ENCODE measurements at regions of chr11 and their contacts with region 1.

Region 1: DNA sequence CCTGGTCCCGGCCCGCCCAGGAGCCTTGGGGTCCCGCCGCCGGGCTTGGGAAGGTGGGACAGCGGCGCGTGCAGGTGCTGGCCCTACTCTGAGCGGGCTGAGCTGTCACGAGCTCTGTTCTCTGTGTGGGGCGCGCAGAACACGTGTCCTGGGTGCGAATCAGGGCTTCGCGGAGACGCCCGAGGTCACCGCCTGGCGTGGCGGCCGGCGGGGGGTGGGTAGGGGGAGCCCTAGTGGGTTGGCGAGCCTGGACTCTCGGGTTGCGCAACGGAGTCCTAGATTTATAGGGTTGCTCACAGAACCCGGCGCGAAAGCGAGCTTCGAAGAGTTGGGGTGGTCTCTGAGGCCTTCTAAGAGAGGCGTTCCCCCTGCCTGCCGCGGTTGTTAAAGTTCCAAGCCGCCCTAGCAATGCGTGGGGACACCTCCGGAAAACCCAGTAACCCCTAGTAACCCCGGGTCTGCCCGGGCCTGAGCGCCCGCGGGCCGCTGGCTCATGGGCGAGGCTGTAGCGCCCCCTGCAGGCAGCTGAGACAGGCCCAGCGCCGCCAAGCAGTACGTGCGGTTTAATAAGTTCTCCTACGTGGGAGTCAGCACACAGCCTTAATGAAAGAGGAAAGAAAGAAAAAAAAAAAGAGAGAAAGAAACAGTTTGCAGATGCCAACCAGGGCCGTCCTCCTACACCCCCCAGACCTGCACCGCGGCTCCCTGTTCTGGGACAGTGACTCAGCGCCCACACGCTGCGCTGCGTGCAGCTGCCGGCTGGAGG is 2.8 kb downstream of the ADM start:
- DNase-seq: peak; percentile 82 to 90 (median 87)
- H3K4me3 ChIP-seq: peak overlapping the region; percentile 79 to 97 (median 89)
- H3K4me3 Mint-ChIP-seq: peak overlapping the region; percentile 96 to 99
- H3K27ac ChIP-seq: peak overlapping the region in 1 of 2 donors; percentile 52
- H3K27ac Mint-ChIP-seq: peak overlapping the region; percentile 60 to 90 (median 77)
- H3K4me1 ChIP-seq: peaks cover 40 to 43% of the 10 kb centered on the region in 2 donors
- H3K4me1 Mint-ChIP-seq: peaks cover 32% of the 10 kb centered on the region
- H3K27me3 ChIP-seq: peaks cover 0 to 16% of the 10 kb centered on the region in 2 donors
- H3K27me3 Mint-ChIP-seq: peaks cover 16 to 25% (median 23%) of the 10 kb centered on the region in 3 donors
- CTCF ChIP-seq: peak; percentile 100

Region 2: GRCh38 chr11:9757809-9758636 is 549.6 kb before region 1 on chr11:
- intact Hi-C with region 1: loop called in 1 of 2 experiments (anchors 5 kb)
- DNase-seq: peak; percentile 78 to 92 (median 84)
- H3K4me3 ChIP-seq: peak overlapping the region; percentile 50 to 82 (median 66)
- H3K4me3 Mint-ChIP-seq: peak overlapping the region; percentile 76 to 91
- H3K27ac ChIP-seq: peak overlapping the region in 1 of 2 donors; percentile 75
- H3K27ac Mint-ChIP-seq: peak overlapping the region; percentile 38 to 91 (median 79)
- H3K4me1 ChIP-seq: peaks cover 19 to 24% of the 10 kb centered on the region in 2 donors
- H3K4me1 Mint-ChIP-seq: peaks cover 41% of the 10 kb centered on the region
- H3K27me3 ChIP-seq: no peaks in the 10 kb centered on the region
- H3K27me3 Mint-ChIP-seq: peaks cover 5 to 8% (median 7%) of the 10 kb centered on the region in 3 donors
- CTCF ChIP-seq: peak; percentile 92

Region 3: GRCh38 chr11:10019906-10020682 is 287.5 kb before region 1 on chr11:
- intact Hi-C with region 1: loop called in 1 of 2 experiments (anchors 10 kb)
- DNase-seq: peak in 2 of 3 donors; percentile 5 to 9
- H3K4me3 ChIP-seq: no peak overlapping the region
- H3K4me3 Mint-ChIP-seq: peak overlapping the region in 1 of 2 donors; percentile 65
- H3K27ac ChIP-seq: peak overlapping the region in 1 of 2 donors; percentile 42
- H3K27ac Mint-ChIP-seq: peak overlapping the region in 4 of 7 donors; percentile 66 to 75 (median 72)
- H3K4me1 ChIP-seq: peaks cover 24 to 35% of the 10 kb centered on the region in 2 donors
- H3K4me1 Mint-ChIP-seq: peaks cover 43% of the 10 kb centered on the region
- H3K27me3 ChIP-seq: no peaks in the 10 kb centered on the region
- H3K27me3 Mint-ChIP-seq: peaks cover 0 to 1% (median 0%) of the 10 kb centered on the region in 3 donors
- CTCF ChIP-seq: no peak

Region 4: GRCh38 chr11:10255388-10256125 is 52.1 kb before region 1 on chr11:
- intact Hi-C with region 1: no loop called
- DNase-seq: peak; percentile 9 to 36 (median 33)
- H3K4me3 ChIP-seq: no peak overlapping the region
- H3K4me3 Mint-ChIP-seq: no peak overlapping the region
- H3K27ac ChIP-seq: peak overlapping the region in 1 of 2 donors; percentile 55
- H3K27ac Mint-ChIP-seq: peak overlapping the region in 5 of 7 donors; percentile 0 to 63 (median 18)
- H3K4me1 ChIP-seq: peaks cover 8 to 15% of the 10 kb centered on the region in 2 donors
- H3K4me1 Mint-ChIP-seq: peaks cover 16% of the 10 kb centered on the region
- H3K27me3 ChIP-seq: no peaks in the 10 kb centered on the region
- H3K27me3 Mint-ChIP-seq: peaks cover 0 to 1% (median 0%) of the 10 kb centered on the region in 3 donors
- CTCF ChIP-seq: no peak

Region 5: DNA sequence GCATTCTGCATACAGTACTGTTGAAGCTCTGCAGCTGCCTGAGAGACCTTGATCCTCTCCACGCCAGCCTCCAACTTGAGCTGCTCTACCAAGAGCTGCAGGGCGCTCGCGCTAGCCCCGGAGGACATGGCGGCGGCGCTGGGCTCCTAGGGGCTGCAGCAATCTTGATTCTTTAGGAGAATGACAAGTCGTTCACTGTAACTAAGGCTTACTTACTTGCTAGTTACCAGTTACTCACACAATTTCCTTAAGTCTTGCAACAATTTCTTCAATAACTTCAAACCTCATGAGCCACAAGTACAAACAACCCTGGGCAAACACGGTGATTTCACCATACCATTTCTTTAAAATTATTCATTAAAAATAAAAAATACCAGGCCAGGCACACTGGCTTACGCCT is 35.5 kb before region 1 on chr11:
- intact Hi-C with region 1: no loop called
- DNase-seq: no peak
- H3K4me3 ChIP-seq: no peak overlapping the region
- H3K4me3 Mint-ChIP-seq: no peak overlapping the region
- H3K27ac ChIP-seq: no peak overlapping the region
- H3K27ac Mint-ChIP-seq: no peak overlapping the region
- H3K4me1 ChIP-seq: no peaks in the 10 kb centered on the region
- H3K4me1 Mint-ChIP-seq: peaks cover 11% of the 10 kb centered on the region
- H3K27me3 ChIP-seq: no peaks in the 10 kb centered on the region
- H3K27me3 Mint-ChIP-seq: no peaks in the 10 kb centered on the region
- CTCF ChIP-seq: no peak

Region 6: DNA sequence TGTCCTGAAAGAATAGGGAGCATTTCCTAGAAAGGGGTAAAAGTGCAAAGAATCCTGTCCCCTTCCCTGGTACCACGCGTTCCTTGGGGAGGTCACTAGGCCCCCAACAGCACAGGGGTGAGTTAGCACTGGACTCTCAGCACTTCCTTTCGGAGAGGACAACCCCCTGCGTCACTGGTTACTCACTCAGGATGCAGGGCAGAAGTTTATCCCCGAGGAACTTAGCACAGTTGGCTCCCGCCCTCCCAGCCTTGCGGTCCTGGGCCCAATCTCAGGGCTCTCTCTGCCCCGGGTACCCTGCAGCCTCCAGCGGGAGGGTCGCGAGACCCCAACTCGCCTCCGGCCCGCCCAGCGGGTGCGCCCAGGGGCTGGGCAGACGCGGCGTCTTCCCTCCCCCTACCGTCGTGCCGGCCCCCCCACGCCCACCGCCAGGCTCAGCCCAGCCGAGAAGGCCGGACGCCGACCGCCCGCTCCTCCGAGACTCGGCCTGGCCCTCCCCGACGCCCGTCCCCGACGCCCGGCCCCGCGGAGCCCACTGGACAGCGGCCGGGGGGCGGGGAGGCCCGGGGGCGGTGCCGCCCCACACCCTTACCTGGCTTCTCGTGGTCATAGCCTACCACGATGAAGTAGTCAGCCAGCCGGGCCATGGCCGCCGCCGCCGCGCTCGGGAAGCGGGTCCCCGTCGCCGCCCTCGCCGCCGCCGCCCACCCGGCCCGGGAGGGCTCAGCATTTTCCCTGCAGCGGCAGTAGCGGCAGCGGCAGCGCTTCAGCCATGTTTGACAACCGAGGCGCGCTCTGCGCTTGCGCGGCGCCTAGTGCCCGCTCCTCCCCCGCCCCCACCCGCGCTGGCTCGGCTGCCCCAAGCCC is 14.0 kb before region 1 on chr11 and contains the start of gene SBF2:
- intact Hi-C with region 1: loop called (anchors 1 to 2 kb)
- DNase-seq: peak; percentile 80 to 92 (median 89)
- H3K4me3 ChIP-seq: peak within 1 kb of the TSS; percentile 73 to 93 (median 91)
- H3K4me3 Mint-ChIP-seq: peak within 1 kb of the TSS; percentile 90
- H3K27ac ChIP-seq: peak within 1 kb of the TSS; percentile 71 to 87
- H3K27ac Mint-ChIP-seq: peak within 1 kb of the TSS; percentile 93 to 97 (median 94)
- H3K4me1 ChIP-seq: peaks cover 66 to 68% of the 10 kb centered on the region in 2 donors
- H3K4me1 Mint-ChIP-seq: peaks cover 61% of the 10 kb centered on the region
- H3K27me3 ChIP-seq: no peaks in the 10 kb centered on the region
- H3K27me3 Mint-ChIP-seq: no peaks in the 10 kb centered on the region
- CTCF ChIP-seq: no peak
- polyA plus RNA-seq, gene SBF2: 8.9 to 30.7 (median 16.4) TPM

Measured in CD14-positive monocyte (primary cell).